Heart right ventricle (tissue), 16 donors: ENCODE measurements at regions of chr19 and their contacts with region 1.

Region 1: DNA sequence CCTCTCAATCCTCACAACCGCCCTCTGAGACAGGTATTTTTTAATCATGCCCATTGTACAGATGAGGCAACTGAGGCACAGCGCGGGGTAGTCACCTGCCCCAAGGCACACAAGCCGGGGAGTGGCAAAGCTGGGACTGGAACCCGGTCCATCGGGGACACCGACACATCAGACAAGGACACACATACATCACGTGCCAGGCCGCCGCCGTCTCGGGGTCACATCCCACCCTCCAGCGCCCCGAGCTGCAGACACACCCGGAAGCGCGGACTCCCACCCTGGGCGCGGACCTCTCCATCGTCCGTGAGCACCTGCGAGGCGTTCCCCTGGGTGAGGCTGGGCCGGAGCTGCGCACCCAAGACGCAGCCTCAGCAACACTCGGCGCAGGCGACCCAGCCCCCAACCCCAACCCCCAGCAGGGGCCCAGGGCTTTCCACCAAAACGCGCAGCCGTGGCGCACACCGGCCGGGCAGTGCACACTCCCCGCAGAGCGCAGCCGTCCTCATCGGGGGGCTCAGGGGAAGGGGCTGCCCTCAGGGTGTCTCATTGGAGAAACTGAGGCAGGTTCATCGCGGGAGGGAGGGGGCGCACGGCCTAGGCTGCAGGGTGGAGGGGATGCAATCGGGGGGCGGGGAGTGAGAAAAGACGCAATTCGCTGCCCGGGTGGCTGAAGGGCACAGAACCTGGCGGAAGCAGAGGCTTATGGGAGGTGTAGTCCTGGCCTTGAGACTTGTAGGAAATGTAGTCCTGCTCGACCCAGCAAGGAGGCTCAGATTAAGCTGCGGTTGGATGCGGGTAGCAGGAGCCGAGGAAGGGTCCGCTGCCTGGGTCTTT is 1.9 kb upstream of the LMTK3 start:
- DNase-seq: peak; percentile 47 to 66
- ATAC-seq: peak; percentile 69 to 88 (median 78)
- H3K4me3 ChIP-seq: peak overlapping the region; percentile 42 to 66 (median 60)
- H3K27ac ChIP-seq: peak overlapping the region in 3 of 10 donors; percentile 27 to 56 (median 28)
- H3K4me1 ChIP-seq: peaks cover 0 to 27% (median 12%) of the 10 kb centered on the region in 9 donors
- H3K27me3 ChIP-seq: peaks cover 4 to 48% (median 35%) of the 10 kb centered on the region in 7 donors
- CTCF ChIP-seq: no peak

Region 2: GRCh38 chr19:48575931-48576622 is 62.6 kb after region 1 on chr19:
- intact Hi-C with region 1: loop called in 6 of 10 experiments (anchors 2 to 5 kb)
- DNase-seq: no peak
- ATAC-seq: no peak
- H3K4me3 ChIP-seq: no peak overlapping the region
- H3K27ac ChIP-seq: no peak overlapping the region
- H3K4me1 ChIP-seq: no peaks in the 10 kb centered on the region
- H3K27me3 ChIP-seq: no peaks in the 10 kb centered on the region
- CTCF ChIP-seq: no peak